Head of caudate nucleus (tissue), 42 donors: ENCODE measurements at regions of chr1 and their contacts with region 1.

Region 1: DNA sequence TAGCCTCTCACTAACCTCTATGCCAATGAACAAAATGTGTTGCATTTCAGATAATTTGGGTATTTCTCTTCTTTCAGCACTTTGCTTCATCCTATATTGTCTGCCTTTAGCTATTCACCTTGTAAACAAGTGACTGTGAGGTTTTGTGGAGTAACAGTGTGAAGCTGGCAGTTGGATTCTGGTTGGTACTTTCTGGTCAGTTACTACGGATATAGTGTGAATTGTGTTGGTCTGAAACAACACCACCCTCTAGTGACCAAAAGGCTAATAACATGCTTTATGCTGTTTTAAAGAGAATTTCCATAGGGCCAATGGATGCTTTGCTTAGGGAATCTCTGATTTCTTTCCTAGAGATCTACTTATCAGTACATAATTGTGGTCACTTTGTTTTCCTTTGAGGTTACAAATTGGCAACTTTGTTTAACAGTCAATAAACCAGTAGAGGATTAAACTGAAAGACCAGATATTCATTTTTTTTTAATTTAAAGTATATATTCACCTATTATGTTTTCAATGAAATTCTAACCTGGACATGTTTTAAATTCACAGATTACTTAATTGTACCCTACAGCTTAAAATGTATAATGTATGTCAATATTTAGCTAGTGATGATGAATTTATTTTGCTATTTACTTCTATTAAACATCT is 2.5 kb upstream of the PTGER3 start:
- DNase-seq: peak in 8 of 42 donors; percentile 21 to 71 (median 35)

Region 2: GRCh38 chr1:70528590-70529333 is 521.3 kb before region 1 on chr1:
- intact Hi-C with region 1: loop called (anchors 5 kb)
- DNase-seq: peak in 25 of 42 donors; percentile 7 to 67 (median 26)

Region 3: GRCh38 chr1:70685300-70686241 is 364.5 kb before region 1 on chr1:
- intact Hi-C with region 1: loop called (anchors 10 kb)
- DNase-seq: peak in 38 of 42 donors; percentile 4 to 76 (median 44)

Region 4: GRCh38 chr1:70990469-70991253 is 59.4 kb before region 1 on chr1:
- intact Hi-C with region 1: no loop called
- DNase-seq: no peak